Psoas muscle (tissue), 8 donors: ENCODE measurements at regions of chr12 and their contacts with region 1.

Region 1: GRCh38 chr12:104108755-104109445 is 29.1 kb downstream of the NFYB start:
- DNase-seq: peak; percentile 85 to 90
- ATAC-seq: peak; percentile 92 to 97 (median 94)
- H3K4me3 ChIP-seq: no peak overlapping the region
- H3K27ac ChIP-seq: peak overlapping the region; percentile 49
- H3K4me1 ChIP-seq: peaks cover 12% of the 10 kb centered on the region
- H3K27me3 ChIP-seq: no peaks in the 10 kb centered on the region
- CTCF ChIP-seq: peak; percentile 86

Region 2: GRCh38 chr12:103626498-103626897 is 482.4 kb before region 1 on chr12:
- intact Hi-C with region 1: loop called in 1 of 2 experiments (anchors 10 kb)
- DNase-seq: peak; percentile 44 to 77
- ATAC-seq: peak; percentile 96 to 98 (median 96)
- H3K4me3 ChIP-seq: no peak overlapping the region
- H3K27ac ChIP-seq: peak overlapping the region; percentile 67
- H3K4me1 ChIP-seq: peaks cover 16% of the 10 kb centered on the region
- H3K27me3 ChIP-seq: no peaks in the 10 kb centered on the region
- CTCF ChIP-seq: peak; percentile 59

Region 3: GRCh38 chr12:103877934-103878510 is 230.9 kb before region 1 on chr12:
- intact Hi-C with region 1: loop called (anchors 5 kb)
- DNase-seq: peak; percentile 18 to 58
- ATAC-seq: peak; percentile 83 to 92 (median 86)
- H3K4me3 ChIP-seq: no peak overlapping the region
- H3K27ac ChIP-seq: no peak overlapping the region
- H3K4me1 ChIP-seq: no peaks in the 10 kb centered on the region
- H3K27me3 ChIP-seq: no peaks in the 10 kb centered on the region
- CTCF ChIP-seq: peak; percentile 72

Region 4: DNA sequence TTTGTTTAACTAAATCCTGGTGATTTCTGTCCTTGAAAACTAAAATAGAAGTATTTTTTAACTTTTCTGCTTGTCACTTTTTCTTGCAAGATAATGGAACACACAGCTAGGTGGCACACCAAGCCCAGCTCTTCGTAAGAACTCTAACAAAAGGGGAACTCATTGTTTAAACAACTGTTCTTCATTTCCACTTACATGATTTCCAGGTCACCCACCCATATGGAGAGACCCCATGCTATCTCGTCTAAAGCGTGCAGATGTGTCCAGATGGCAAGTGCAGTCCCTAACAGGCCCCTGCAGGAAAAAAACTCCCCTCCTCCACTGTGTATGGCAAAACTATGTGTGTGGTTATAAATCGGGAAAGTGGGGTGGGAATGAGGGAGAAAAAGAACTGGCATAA is 224.6 kb before region 1 on chr12:
- intact Hi-C with region 1: loop called (anchors 5 kb)
- DNase-seq: no peak
- ATAC-seq: peak in 1 of 4 donors; percentile 54
- H3K4me3 ChIP-seq: no peak overlapping the region
- H3K27ac ChIP-seq: no peak overlapping the region
- H3K4me1 ChIP-seq: no peaks in the 10 kb centered on the region
- H3K27me3 ChIP-seq: no peaks in the 10 kb centered on the region
- CTCF ChIP-seq: peak; percentile 44

Region 5: GRCh38 chr12:104057771-104058197 is 51.1 kb before region 1 on chr12:
- intact Hi-C with region 1: loop called (anchors 2 to 5 kb)
- DNase-seq: no peak
- ATAC-seq: peak in 3 of 4 donors; percentile 33 to 60 (median 58)
- H3K4me3 ChIP-seq: no peak overlapping the region
- H3K27ac ChIP-seq: no peak overlapping the region
- H3K4me1 ChIP-seq: peaks cover 16% of the 10 kb centered on the region
- H3K27me3 ChIP-seq: no peaks in the 10 kb centered on the region
- CTCF ChIP-seq: peak; percentile 60

Region 6: DNA sequence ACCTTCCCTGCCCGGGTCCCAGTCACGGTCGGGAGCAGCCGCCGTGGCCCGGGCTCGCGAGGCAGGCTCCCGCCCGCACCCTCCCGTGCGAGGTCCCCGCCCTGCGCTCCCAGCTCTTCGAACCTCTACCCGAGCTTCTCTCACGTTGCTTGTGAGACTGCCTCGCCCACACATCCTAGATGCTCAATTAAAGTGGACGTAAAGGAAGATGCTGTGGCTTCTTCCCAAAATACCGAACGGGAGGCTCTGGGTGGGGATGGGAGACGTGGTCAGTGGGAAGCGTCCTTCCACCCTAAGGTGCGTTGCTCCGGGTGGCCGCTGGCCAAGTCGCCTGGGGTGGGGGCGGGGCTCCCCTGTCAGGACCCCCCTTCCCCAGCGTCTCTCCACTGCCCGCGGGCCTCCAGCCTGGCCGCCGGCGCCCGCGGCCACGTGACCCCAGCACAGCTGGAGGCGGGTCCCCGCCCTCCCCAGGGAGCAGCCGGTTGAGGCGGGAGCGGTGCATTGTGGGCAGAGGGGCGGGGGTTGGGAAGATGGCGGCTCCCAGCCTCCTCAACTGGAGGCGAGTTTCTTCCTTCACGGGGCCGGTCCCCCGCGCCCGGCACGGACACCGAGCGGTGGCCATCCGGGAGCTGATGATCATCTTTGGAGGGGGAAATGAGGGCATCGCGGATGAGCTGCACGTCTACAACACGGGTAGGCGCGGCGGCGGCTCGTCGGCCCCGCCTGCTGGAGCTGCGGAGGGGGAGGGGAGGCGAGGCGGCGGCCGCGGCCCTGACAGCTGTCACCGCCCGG is 44.7 kb before region 1 on chr12 and contains the start of gene HCFC2:
- intact Hi-C with region 1: loop called in 1 of 2 experiments (anchors 5 kb)
- DNase-seq: peak; percentile 94 to 96
- ATAC-seq: peak; percentile 99
- H3K4me3 ChIP-seq: peak within 1 kb of the TSS; percentile 97
- H3K27ac ChIP-seq: peak within 1 kb of the TSS; percentile 96
- H3K4me1 ChIP-seq: peaks cover 19% of the 10 kb centered on the region
- H3K27me3 ChIP-seq: no peaks in the 10 kb centered on the region
- CTCF ChIP-seq: no peak
- total RNA-seq, gene HCFC2: 22.8 to 27.8 (median 24.5) TPM